HEK293 (cell line): ENCODE measurements at regions of chr2 and their contacts with region 1.

Region 1: DNA sequence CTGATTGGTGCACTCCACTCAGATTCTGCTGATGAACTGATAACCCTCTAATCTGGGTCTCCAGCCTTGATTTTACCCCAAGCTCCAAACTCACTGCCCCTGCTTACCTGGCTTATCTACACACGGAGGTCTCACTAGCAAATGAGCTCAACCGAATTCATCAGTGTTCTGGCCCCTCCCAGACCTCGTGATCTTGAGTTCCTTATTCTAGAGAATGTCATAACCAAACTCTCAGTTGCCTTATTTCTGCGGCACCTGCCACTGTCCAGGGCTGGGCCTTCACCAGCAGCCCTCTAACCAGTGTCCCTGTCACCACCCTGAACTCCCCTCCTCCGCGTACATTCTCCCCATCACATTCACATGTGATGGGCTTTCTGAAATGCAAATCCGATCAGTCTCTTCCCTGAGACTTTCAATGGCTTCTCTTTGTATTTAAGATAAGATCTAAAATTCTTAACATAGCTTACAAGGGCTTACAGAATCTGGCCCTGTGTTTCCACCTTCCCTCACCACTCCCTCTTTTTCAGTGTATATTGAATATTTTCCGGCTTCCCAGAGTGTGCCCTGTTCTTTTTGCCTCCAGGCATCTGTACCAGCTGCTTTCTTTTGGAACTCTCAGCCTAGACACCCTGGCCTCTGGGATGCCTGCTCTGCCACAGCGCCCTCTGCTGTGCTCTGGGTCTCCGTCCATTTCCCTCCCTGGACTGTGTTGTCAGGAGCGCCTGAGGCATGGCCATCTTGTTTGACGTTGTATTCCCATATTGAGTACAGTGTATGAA is 31.1 kb downstream of the NAB1 start:
- H3K4me3 ChIP-seq: no peak overlapping the region
- H3K27ac ChIP-seq: no peak overlapping the region
- H3K4me1 ChIP-seq: peaks cover 14% of the 10 kb centered on the region
- CTCF ChIP-seq: 0 out of 2 replicates have a peak, but pooled peaks have one; percentile 46

Region 2: GRCh38 chr2:190666895-190667294 is 13.1 kb before region 1 on chr2:
- CTCF ChIA-PET with region 1: interaction called, 16 read pairs
- POLR2A ChIA-PET with region 1: no interaction called
- H3K4me3 ChIP-seq: no peak overlapping the region
- H3K27ac ChIP-seq: no peak overlapping the region
- H3K4me1 ChIP-seq: peaks cover 3% of the 10 kb centered on the region; the same call in 1 of the 2 replicates
- CTCF ChIP-seq: no peak

Region 3: DNA sequence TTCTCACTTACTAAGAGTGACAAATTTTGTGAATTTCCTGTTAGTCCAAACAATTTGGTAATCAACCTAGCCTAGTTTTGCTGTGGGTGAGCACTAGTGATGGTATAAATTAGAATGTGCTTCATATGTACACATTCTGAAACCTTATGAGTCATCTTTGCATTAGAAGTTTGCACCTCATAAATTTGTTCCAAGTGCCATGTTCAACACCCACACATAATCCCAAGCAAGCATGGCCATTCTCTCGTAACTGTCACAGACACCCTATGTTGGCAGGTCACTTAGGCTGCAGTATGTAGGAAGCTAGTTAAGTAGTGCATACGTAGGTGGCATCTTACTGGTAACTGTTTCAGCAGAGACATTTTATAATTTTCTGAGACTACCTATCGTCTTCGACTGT is 15.7 kb after region 1 on chr2:
- CTCF ChIA-PET with region 1: interaction called, 28 read pairs
- POLR2A ChIA-PET with region 1: no interaction called
- H3K4me3 ChIP-seq: no peak overlapping the region
- H3K27ac ChIP-seq: no peak overlapping the region
- H3K4me1 ChIP-seq: no peaks in the 10 kb centered on the region
- CTCF ChIP-seq: no peak

Region 4: DNA sequence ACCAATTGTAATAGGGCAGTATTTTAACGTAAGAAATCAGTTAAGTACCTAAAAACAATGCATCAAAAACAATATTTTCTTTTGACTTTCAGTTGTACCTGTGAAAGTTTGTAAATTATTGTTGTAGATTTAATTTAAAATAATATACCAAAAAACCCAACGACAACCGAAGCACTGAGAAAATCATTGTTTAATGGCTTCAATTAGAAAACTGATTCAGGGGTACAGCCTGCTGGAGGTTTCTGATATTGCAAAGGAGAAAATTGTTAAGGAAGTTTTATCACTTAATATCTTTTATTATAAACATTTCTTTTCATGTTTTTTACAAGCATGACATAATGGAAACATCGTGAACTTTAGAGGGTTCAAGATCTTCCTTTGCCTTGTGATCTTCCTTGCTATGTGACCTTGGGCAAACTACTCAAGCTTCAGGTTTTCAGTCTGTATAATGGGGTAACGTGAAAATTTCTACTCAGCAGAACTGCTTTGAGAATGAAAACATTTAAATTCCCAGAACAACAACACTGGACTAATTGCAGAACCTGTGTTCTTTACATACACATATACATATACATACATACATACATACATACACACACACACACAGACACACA is 124.3 kb after region 1 on chr2:
- CTCF ChIA-PET with region 1: no interaction called
- POLR2A ChIA-PET with region 1: no interaction called
- H3K4me3 ChIP-seq: no peak overlapping the region
- H3K27ac ChIP-seq: no peak overlapping the region
- H3K4me1 ChIP-seq: no peaks in the 10 kb centered on the region
- CTCF ChIP-seq: no peak

Region 5: GRCh38 chr2:190819840-190820301 is 139.9 kb after region 1 on chr2:
- CTCF ChIA-PET with region 1: no interaction called
- POLR2A ChIA-PET with region 1: no interaction called
- H3K4me3 ChIP-seq: no peak overlapping the region
- H3K27ac ChIP-seq: no peak overlapping the region
- H3K4me1 ChIP-seq: no peaks in the 10 kb centered on the region
- CTCF ChIP-seq: no peak